ENCODE measurements at regions of chr1 and their contacts with region 1.

Region 1: GRCh38 chr1:178542560-178543356 is 29.8 kb downstream of the TEX35 start:
- DNase-seq: peak; percentile 98
- H3K4me3 ChIP-seq: peak overlapping the region; percentile 78 to 82 (median 80)
- H3K27ac ChIP-seq: peak overlapping the region; percentile 76 to 83 (median 82)
- H3K4me1 ChIP-seq: peaks cover 15 to 32% (median 27%) of the 10 kb centered on the region in 4 donors
- H3K27me3 ChIP-seq: no peaks in the 10 kb centered on the region
- CTCF ChIP-seq: peak; percentile 96 to 99 (median 98)
- EP300 ChIP-seq: no peak
- POLR2A ChIP-seq: no peak

Region 2: GRCh38 chr1:178438432-178438831 is 104.3 kb before region 1 on chr1:
- intact Hi-C with region 1: no loop called
- DNase-seq: no peak
- H3K4me3 ChIP-seq: no peak overlapping the region
- H3K27ac ChIP-seq: no peak overlapping the region
- H3K4me1 ChIP-seq: peaks cover 0 to 4% (median 0%) of the 10 kb centered on the region in 4 donors
- H3K27me3 ChIP-seq: no peaks in the 10 kb centered on the region
- CTCF ChIP-seq: no peak
- EP300 ChIP-seq: no peak
- POLR2A ChIP-seq: no peak

Region 3: GRCh38 chr1:178752891-178753290 is 210.1 kb after region 1 on chr1:
- intact Hi-C with region 1: loop called (anchors 2 kb)
- DNase-seq: no peak
- H3K4me3 ChIP-seq: no peak overlapping the region
- H3K27ac ChIP-seq: no peak overlapping the region
- H3K4me1 ChIP-seq: peaks cover 0 to 8% (median 4%) of the 10 kb centered on the region in 4 donors
- H3K27me3 ChIP-seq: no peaks in the 10 kb centered on the region
- CTCF ChIP-seq: no peak
- EP300 ChIP-seq: no peak
- POLR2A ChIP-seq: no peak